Endothelial cell of umbilical vein (primary cell): ENCODE measurements at regions of chr7 and their contacts with region 1.

Region 1: GRCh38 chr7:39580149-39580874 is 14.1 kb downstream of the YAE1 start:
- DNase-seq: peak; percentile 94
- H3K4me3 ChIP-seq: no peak overlapping the region
- H3K27ac ChIP-seq: peak overlapping the region; percentile 1
- H3K4me1 ChIP-seq: no peaks in the 10 kb centered on the region
- H3K27me3 ChIP-seq: no peaks in the 10 kb centered on the region
- CTCF ChIP-seq: peak; percentile 74
- POLR2A ChIP-seq: no peak

Region 2: DNA sequence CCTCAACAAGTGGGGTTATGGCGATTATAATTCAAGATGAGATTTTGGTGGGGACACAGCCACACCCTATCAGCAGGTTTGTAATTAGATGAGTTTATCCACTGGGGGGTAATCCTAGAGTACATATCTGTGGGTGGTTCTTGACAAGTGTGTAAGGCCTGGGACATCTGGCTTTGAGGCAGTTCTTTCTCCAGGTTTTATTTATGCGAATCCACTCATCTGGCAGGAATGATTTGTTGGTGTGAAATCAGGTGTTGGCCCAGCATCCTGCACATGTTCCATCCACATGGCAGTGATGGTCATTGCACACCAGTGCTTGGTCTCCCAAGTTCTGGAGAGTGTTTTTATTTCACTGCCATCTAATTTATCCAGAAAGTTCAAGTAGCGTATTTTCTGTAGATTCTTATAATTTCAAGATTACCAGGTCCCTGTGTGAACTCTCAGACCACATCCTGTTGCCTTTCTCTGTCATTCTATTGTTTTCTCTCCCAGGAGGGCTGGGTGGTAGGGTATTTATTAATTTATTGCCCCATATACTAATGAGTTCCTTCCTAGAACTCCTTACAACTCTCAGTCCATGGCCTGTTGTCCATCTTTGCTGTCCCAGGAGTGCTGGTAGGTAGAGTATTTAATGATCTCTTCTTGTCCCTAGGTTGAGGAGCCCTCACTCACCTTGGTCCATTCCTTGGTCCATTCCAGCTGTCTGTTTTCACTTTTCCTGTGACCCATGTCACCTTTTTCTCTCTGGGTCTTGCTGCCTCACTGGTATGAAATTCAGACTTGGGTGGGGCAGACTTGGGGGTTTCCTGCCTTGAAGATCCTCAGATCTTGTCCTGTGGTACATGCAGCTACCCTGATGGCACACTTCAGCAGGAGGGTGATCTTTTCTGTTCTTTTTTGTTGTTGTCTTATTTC is 53.5 kb after region 1 on chr7:
- CTCF ChIA-PET with region 1: interaction called, 138 read pairs
- POLR2A ChIA-PET with region 1: interaction called, 4 read pairs
- dilution Hi-C with region 1: no loop called
- intact Hi-C with region 1: no loop called
- DNase-seq: peak; percentile 37
- H3K4me3 ChIP-seq: no peak overlapping the region
- H3K27ac ChIP-seq: peak overlapping the region; percentile 38
- H3K4me1 ChIP-seq: peaks cover 38% of the 10 kb centered on the region
- H3K27me3 ChIP-seq: no peaks in the 10 kb centered on the region
- CTCF ChIP-seq: no peak
- POLR2A ChIP-seq: peak; percentile 19

Region 3: DNA sequence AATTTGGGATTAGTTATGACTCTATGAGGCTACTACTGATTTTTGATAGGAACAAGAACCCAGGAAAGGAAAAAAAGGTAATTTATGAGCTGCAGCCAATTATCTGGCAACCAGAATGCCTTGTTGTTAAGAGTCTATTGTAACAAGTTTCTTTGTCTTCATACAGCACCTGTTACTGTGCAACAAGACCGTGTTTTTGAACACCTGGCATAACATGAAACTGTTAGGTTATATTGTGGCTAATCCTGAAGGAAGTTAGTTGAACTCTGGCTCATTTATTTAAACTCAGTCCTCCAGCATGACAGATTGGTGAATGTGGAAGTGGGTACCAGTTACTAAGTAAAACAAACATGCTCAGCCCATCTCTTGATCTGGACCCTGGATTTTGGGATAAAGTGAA is 76.1 kb after region 1 on chr7:
- CTCF ChIA-PET with region 1: interaction called, 18 read pairs
- POLR2A ChIA-PET with region 1: no interaction called
- dilution Hi-C with region 1: no loop called
- intact Hi-C with region 1: loop called (anchors 2 kb)
- DNase-seq: no peak
- H3K4me3 ChIP-seq: no peak overlapping the region
- H3K27ac ChIP-seq: no peak overlapping the region
- H3K4me1 ChIP-seq: peaks cover 6% of the 10 kb centered on the region
- H3K27me3 ChIP-seq: no peaks in the 10 kb centered on the region
- CTCF ChIP-seq: no peak
- POLR2A ChIP-seq: no peak

Region 4: DNA sequence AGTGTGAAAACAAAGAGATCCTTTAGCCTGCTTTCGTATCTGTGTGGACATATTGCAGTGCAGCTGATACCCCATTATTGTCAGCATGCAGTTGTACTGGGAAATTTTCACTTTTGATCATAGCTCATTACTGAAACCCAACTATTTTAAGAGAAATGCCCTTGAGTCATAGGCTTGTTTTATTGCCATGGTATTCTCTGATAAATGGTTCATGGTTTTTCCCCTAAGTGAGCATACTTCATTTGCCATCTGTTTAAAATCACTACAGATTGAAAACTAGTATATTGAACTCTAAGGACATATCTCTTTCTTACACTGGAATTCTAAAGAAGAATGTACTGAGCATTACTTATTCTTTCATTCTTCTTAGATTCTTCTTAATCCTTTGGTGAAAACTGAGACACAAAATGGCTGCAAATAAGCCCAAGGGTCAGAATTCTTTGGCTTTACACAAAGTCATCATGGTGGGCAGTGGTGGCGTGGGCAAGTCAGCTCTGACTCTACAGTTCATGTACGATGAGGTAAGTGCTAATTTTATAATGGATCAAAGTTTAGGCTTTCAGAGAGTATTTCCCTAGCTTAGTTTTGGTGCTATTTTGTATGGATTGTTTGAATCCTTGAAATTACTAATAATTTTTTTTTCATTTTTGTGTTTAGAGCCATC is 106.1 kb after region 1 on chr7:
- CTCF ChIA-PET with region 1: interaction called, 23 read pairs
- POLR2A ChIA-PET with region 1: interaction called, 3 read pairs
- dilution Hi-C with region 1: no loop called
- intact Hi-C with region 1: loop called (anchors 2 kb)
- DNase-seq: no peak
- H3K4me3 ChIP-seq: no peak overlapping the region
- H3K27ac ChIP-seq: no peak overlapping the region
- H3K4me1 ChIP-seq: peaks cover 64% of the 10 kb centered on the region
- H3K27me3 ChIP-seq: no peaks in the 10 kb centered on the region
- CTCF ChIP-seq: no peak
- POLR2A ChIP-seq: no peak

Region 5: DNA sequence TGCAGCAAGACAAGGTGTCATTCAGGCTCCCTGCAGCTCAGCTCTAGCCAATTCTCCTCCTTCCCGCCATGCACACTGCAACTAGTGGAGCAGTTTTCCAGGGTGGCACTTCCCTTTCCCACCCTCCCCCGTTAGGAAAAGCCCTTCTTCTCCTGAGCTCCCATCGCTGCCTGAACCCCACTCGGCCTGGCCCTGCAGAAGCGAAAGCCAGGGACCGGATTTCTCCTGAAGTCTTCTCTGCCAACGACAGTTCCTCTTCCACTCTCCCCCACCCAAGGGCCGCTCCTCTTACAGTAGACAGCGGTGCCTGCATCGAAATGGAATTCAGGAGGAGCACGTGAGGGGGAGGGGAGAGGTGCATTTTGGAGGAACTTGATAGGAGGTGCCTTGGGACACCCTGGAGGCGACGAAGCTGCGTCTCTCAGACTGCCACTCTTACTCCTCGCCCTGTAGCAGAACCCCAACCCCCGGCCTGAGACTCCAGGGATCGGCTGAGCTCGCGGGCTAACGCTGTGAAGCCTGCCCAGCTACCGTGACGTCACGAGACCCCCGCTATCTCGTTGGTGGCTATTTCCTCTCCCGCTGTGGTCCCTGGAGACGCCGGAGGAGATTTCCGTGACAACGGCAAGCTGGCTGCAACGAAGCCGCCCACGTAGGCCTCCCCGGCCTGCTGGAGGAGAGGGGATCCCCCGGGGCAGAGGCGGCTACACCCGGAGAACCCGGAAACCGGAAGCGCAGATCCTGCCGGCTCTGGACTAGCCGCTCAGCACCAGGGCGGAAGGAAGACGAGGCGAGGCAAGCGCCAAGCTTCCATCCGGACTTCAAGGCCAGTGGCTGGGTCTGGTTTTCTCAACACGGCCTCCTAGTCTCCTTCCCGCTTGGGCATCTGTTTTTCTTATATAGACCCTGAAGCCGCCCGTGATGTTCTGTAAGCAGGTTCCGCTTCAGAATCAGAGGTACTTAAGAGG is 152.8 kb after region 1 on chr7:
- CTCF ChIA-PET with region 1: interaction called, 20 read pairs
- POLR2A ChIA-PET with region 1: no interaction called
- dilution Hi-C with region 1: no loop called
- intact Hi-C with region 1: no loop called
- DNase-seq: peak; percentile 93
- H3K4me3 ChIP-seq: peak overlapping the region; percentile 31 to 46 (median 42)
- H3K27ac ChIP-seq: peak overlapping the region; percentile 84
- H3K4me1 ChIP-seq: peaks cover 23% of the 10 kb centered on the region
- H3K27me3 ChIP-seq: no peaks in the 10 kb centered on the region
- CTCF ChIP-seq: no peak
- POLR2A ChIP-seq: peak; percentile 34

Region 6: DNA sequence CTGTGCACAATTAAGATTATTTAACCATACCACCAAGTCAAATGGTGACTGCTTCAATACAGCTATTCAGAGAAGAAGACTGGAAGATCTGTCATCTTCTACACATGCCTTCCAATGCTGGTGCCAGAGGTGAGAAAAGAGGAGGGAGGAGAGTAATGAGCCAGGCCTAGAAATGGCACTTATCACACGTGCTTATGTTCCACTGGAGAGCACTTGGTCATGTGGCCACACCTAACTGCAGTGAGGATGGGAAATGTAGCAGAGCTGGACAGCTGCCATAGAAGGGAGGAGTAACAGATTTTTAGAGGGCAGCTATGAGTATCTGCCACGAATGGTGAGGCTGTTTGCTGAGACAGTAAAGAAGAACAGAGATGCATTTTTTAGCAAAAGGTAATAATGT is 477.0 kb after region 1 on chr7:
- CTCF ChIA-PET with region 1: interaction called, 43 read pairs
- POLR2A ChIA-PET with region 1: no interaction called
- dilution Hi-C with region 1: no loop called
- intact Hi-C with region 1: loop called (anchors 1 kb)
- DNase-seq: no peak
- H3K4me3 ChIP-seq: no peak overlapping the region
- H3K27ac ChIP-seq: no peak overlapping the region
- H3K4me1 ChIP-seq: no peaks in the 10 kb centered on the region
- H3K27me3 ChIP-seq: no peaks in the 10 kb centered on the region
- CTCF ChIP-seq: no peak
- POLR2A ChIP-seq: no peak